Heart right ventricle (tissue), 16 donors: ENCODE measurements at regions of chr3 and their contacts with region 1.

Region 1: DNA sequence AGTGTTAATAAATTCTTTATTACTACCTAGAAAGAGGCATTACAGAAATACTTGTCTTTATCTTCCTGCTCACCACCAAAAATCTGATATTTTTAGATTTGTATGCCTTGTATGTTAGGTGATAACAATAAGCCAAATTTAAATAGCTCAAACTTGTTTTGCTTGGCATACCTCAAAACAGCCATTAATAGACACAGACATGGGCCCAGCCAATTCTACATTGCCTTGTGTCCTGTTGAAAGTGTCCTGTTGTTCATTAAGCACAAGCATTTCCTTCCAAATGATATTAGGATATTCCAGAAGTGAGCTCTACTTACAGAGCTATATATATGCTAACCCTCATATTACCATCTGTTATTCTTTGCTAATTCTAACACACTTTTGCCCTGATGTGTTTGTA is 438.6 kb upstream of the ZNF385D start:
- DNase-seq: no peak
- ATAC-seq: no peak
- H3K4me3 ChIP-seq: no peak overlapping the region
- H3K27ac ChIP-seq: no peak overlapping the region
- H3K4me1 ChIP-seq: no peaks in the 10 kb centered on the region
- H3K27me3 ChIP-seq: no peaks in the 10 kb centered on the region
- CTCF ChIP-seq: no peak

Region 2: GRCh38 chr3:22141769-22142168 is 47.8 kb before region 1 on chr3:
- intact Hi-C with region 1: no loop called
- DNase-seq: no peak
- ATAC-seq: no peak
- H3K4me3 ChIP-seq: no peak overlapping the region
- H3K27ac ChIP-seq: no peak overlapping the region
- H3K4me1 ChIP-seq: no peaks in the 10 kb centered on the region
- H3K27me3 ChIP-seq: no peaks in the 10 kb centered on the region
- CTCF ChIP-seq: no peak

Region 3: DNA sequence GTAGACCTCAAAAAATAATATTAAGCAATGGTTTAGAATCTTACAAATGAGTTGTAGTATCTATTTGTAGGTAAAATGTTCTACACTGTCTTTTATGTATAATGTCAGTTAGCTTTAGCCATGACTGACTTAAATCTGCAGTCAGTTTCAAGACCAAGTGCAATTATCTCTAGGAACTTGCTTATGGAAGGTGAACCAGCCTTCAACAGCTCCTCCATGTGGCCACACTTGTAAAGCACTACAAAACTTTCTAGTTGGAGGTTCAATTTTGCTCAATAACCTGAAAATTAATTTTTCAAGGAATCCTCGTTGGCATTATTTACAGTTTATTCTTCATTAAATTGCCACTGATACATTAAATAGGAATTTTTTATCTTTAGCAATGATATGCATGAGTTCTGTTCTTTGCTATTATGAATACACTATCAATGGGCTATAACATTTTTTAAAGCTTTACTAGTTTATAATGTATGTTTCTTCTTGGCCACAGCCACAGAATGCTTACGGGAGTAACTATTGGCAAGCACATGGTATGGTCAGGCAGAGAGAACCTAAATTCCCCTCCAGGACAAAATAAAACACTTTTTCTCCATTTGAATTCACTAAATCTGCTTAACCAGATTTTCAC is 698.2 kb after region 1 on chr3:
- intact Hi-C with region 1: loop called in 1 of 10 experiments (anchors 5 kb)
- DNase-seq: no peak
- ATAC-seq: no peak
- H3K4me3 ChIP-seq: no peak overlapping the region
- H3K27ac ChIP-seq: no peak overlapping the region
- H3K4me1 ChIP-seq: peaks cover 0 to 3% (median 0%) of the 10 kb centered on the region in 9 donors
- H3K27me3 ChIP-seq: peaks cover 0 to 10% (median 0%) of the 10 kb centered on the region in 7 donors
- CTCF ChIP-seq: peak in 7 of 9 donors; percentile 31 to 61 (median 50)